Naive thymus-derived CD4-positive, alpha-beta T cell (primary cell): ENCODE measurements at regions of chr7 and their contacts with region 1.

Region 1: GRCh38 chr7:13067036-13067435 is 379.6 kb downstream of the ARL4A start:
- DNase-seq: no peak
- ATAC-seq: no peak
- H3K4me3 ChIP-seq: no peak overlapping the region
- H3K4me3 Mint-ChIP-seq: no peak overlapping the region
- H3K27ac ChIP-seq: no peak overlapping the region
- H3K27ac Mint-ChIP-seq: no peak overlapping the region
- H3K4me1 ChIP-seq: no peaks in the 10 kb centered on the region
- H3K4me1 Mint-ChIP-seq: no peaks in the 10 kb centered on the region
- H3K27me3 ChIP-seq: no peaks in the 10 kb centered on the region
- H3K27me3 Mint-ChIP-seq: peaks cover 0 to 11% (median 9%) of the 10 kb centered on the region in 5 donors

Region 2: DNA sequence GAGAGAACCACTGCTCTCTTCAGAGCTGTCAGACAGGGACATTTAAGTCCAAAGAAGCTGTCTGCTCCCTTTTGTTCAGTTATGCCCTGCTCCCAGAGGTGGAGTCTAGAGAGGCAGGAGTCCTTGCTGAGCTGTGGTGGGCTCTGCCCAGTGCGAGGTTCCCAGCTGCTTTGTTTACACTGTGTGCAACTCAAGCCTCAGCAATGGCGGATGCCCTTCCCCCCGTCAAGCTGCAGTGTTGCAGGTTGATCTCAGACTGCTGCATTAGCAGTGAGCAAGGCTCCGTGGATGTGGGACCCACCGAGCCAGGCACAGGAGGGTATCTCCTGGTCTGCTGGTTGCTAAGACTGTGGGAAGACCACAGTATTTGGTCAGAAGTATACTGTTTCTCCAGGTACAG is 59.3 kb after region 1 on chr7:
- CTCF ChIA-PET with region 1: no interaction called
- POLR2A ChIA-PET with region 1: no interaction called
- intact Hi-C with region 1: loop called in 1 of 2 experiments (anchors 10 kb)
- DNase-seq: no peak
- ATAC-seq: no peak
- H3K4me3 ChIP-seq: no peak overlapping the region
- H3K4me3 Mint-ChIP-seq: no peak overlapping the region
- H3K27ac ChIP-seq: no peak overlapping the region
- H3K27ac Mint-ChIP-seq: no peak overlapping the region
- H3K4me1 ChIP-seq: no peaks in the 10 kb centered on the region
- H3K4me1 Mint-ChIP-seq: no peaks in the 10 kb centered on the region
- H3K27me3 ChIP-seq: no peaks in the 10 kb centered on the region
- H3K27me3 Mint-ChIP-seq: peaks cover 0 to 16% (median 10%) of the 10 kb centered on the region in 5 donors